ENCODE measurements at regions of chr19 and their contacts with region 1.

Region 1: DNA sequence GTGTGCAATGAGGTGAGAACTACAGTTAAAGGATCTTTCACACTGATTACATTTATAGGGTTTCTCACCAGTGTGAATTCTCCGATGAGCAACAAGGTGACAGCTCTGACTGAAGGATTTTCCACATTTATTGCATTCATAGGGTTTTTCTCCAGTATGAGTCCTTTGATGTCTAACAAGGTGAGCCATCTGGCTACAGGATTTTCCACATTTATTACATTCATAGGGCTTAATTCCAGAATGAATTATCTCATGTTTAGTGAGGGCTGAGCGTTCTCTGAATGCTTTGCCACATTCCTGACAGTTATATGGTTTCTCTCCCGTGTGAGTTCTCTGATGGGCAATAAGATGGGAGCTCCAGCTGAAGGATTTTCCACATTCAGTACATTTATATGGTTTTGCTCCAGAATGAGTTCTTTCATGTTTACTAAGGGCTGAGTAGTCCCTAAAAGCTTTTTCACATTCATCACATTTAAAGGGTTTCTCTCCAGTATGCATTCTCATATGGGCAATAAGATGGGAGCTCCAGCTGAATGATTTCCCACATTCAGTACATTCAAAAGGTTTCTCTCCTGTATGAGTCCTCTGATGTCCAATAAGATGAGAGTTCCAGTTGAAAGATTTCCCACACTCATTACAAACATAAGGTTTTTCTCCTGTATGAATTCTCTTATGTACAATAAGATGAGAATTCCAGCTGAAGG is 4.4 kb upstream of the C19orf18 start:
- DNase-seq: no peak
- H3K4me3 ChIP-seq: no peak overlapping the region
- H3K27ac ChIP-seq: no peak overlapping the region
- H3K4me1 ChIP-seq: no peaks in the 10 kb centered on the region
- H3K27me3 ChIP-seq: no peaks in the 10 kb centered on the region
- CTCF ChIP-seq: no peak

Region 2: GRCh38 chr19:57308514-57308913 is 670.2 kb before region 1 on chr19:
- CTCF ChIA-PET with region 1: no interaction called
- POLR2A ChIA-PET with region 1: interaction called, 11 read pairs
- intact Hi-C with region 1: no loop called
- DNase-seq: peak in 1 of 2 experiments; percentile 31
- H3K4me3 ChIP-seq: no peak overlapping the region
- H3K27ac ChIP-seq: no peak overlapping the region
- H3K4me1 ChIP-seq: no peaks in the 10 kb centered on the region
- H3K27me3 ChIP-seq: no peaks in the 10 kb centered on the region
- CTCF ChIP-seq: no peak

Region 3: DNA sequence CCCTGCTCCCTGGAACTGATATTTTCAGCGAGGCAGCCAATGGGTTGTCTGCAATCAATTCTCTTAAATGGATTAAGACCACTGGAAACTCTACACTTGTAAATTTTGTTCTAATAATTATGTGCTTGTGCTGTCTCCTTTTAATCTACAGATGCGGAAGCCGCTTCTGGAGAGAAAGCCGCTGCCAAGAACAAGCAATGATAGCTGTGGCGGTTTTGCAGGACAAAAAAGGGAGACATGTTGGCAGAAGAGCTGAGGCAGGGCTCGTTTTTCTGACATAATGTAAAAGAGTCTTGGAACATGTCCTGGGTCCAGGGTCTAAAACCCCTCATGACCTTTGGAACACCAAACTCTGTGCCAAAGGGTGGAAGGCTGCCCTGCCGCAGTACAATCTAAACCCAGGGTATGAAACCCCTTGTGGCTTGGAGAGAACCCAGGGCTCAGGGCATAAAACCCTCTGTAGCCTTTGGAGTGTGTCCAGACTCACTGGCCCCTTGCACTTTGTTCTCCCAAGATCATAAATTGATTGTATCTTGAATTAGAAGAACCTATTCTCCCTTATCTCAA is 75.0 kb before region 1 on chr19:
- CTCF ChIA-PET with region 1: no interaction called
- POLR2A ChIA-PET with region 1: no interaction called
- intact Hi-C with region 1: no loop called
- DNase-seq: no peak
- H3K4me3 ChIP-seq: no peak overlapping the region
- H3K27ac ChIP-seq: no peak overlapping the region
- H3K4me1 ChIP-seq: no peaks in the 10 kb centered on the region
- H3K27me3 ChIP-seq: no peaks in the 10 kb centered on the region
- CTCF ChIP-seq: peak; percentile 48; the same call in 1 of the 2 replicates

Region 4: GRCh38 chr19:58059003-58059670 is 80.4 kb after region 1 on chr19 and contains the start of gene ZNF135:
- CTCF ChIA-PET with region 1: no interaction called
- POLR2A ChIA-PET with region 1: no interaction called
- intact Hi-C with region 1: no loop called
- DNase-seq: no peak
- H3K4me3 ChIP-seq: no peak within 1 kb of the TSS
- H3K27ac ChIP-seq: no peak within 1 kb of the TSS
- H3K4me1 ChIP-seq: no peaks in the 10 kb centered on the region
- H3K27me3 ChIP-seq: peaks cover 17% of the 10 kb centered on the region
- CTCF ChIP-seq: no peak
- total RNA-seq, gene ZNF135: 0.15 TPM in 1 of 2 replicates, not detected in the other

Region 5: DNA sequence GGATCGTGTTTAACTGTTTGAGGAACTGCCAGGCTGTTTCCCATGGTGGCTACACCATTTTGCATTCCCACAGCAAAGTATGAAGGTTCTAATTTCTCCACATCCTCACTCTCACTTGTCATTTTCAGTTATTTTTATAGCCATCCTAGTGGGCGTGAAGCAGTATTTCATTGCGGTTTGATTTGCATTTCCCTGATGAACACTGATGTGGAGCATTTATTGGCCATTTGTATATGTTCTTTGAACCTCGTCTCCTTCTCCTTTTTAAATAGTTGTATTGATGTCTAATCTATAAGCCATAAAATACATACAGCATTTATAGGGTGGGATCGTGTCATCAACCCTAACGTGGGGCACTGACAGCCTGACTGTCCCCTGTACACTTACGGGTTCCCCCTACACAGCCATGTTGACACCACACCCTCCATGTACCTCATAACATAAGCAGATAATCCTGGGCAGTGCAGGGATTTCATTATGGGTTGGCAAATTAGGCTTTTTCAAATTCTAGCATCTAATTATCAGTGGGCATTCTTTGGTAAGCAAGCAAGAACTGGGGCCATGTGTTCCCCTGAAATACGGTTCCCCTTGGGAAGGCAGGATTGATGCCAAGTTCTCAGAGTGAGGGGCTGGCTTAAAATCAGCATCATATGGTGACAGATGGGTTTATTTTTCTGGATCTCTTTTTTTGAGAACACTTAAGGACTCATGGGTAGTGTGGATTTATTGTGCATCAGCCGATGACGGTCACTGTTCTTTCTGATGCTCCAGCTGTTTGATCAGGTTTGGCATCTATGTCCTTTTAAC is 552.5 kb after region 1 on chr19:
- CTCF ChIA-PET with region 1: no interaction called
- POLR2A ChIA-PET with region 1: no interaction called
- intact Hi-C with region 1: no loop called
- DNase-seq: no peak
- H3K4me3 ChIP-seq: no peak overlapping the region
- H3K27ac ChIP-seq: no peak overlapping the region
- H3K4me1 ChIP-seq: no peaks in the 10 kb centered on the region
- H3K27me3 ChIP-seq: peaks cover 51% of the 10 kb centered on the region
- CTCF ChIP-seq: no peak

Measured in PC-9 (cell line).